Mammary epithelial cell (primary cell): ENCODE measurements at regions of chr17 and their contacts with region 1.

Region 1: GRCh38 chr17:80374732-80375585 is 40.0 kb upstream of the ENDOV start:
- DNase-seq: no peak
- H3K4me3 ChIP-seq: no peak overlapping the region
- H3K27ac ChIP-seq: no peak overlapping the region
- H3K4me1 ChIP-seq: no peaks in the 10 kb centered on the region
- H3K27me3 ChIP-seq: no peaks in the 10 kb centered on the region
- CTCF ChIP-seq: no peak

Region 2: DNA sequence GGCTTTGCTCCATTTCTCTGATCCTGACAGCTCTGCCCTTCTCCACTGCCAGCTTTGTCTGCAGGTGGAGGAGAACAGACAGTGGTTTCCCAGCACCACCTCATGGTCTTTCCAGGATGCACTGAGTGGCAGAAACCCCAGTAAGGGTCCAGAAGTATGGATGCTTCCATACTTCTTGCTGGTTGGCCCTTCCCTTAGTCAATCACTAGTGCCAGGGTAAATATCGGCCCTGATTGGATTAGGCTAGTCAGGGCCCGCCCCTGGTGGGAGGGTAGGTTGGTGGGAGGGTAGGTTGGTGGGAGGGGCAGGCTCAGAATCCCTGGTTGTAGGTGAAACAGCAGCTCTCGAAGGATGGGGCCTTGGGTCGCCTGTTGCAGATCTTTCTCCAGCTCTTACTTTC is 104.1 kb before region 1 on chr17:
- CTCF ChIA-PET with region 1: no interaction called
- dilution Hi-C with region 1: loop called (anchors 5 kb)
- in situ Hi-C with region 1: no loop called
- intact Hi-C with region 1: no loop called
- DNase-seq: no peak
- H3K4me3 ChIP-seq: no peak overlapping the region
- H3K27ac ChIP-seq: no peak overlapping the region
- H3K4me1 ChIP-seq: no peaks in the 10 kb centered on the region
- H3K27me3 ChIP-seq: no peaks in the 10 kb centered on the region
- CTCF ChIP-seq: no peak

Region 3: DNA sequence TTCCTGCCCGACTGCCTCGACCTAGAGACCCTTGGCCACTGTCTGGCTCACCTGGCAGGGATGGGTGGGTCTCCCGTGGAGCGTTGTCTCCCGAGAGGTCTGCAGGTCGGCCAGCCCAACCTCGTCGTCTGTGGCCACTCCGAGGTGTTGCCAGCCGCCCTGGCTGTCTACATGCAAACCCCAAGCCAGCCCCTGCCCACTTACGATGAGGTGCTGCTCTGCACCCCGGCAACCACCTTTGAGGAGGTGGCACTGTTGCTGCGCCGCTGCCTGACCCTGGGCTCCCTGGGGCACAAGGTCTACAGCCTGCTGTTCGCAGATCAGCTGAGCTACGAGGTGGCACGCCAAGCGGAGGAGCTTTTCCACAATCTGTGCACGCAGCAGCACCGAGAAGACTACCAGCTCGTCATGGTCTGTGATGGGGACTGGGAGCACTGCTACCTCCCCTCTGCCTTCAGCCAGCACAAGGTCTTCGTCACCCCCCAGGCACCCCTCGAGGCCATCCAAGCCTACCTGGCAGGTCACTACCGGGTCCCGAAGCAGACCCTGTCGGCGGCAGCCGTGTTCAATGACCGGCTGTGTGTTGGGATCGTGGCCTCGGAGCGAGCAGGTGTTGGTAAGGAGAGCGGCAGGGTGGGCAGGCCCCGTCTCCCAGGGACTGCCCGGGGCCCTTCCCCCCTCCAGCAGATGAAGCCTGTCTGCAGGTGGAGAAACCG is 35.1 kb before region 1 on chr17:
- CTCF ChIA-PET with region 1: no interaction called
- dilution Hi-C with region 1: loop called (anchors 5 kb)
- in situ Hi-C with region 1: no loop called
- intact Hi-C with region 1: no loop called
- DNase-seq: no peak
- H3K4me3 ChIP-seq: no peak overlapping the region
- H3K27ac ChIP-seq: no peak overlapping the region
- H3K4me1 ChIP-seq: no peaks in the 10 kb centered on the region
- H3K27me3 ChIP-seq: no peaks in the 10 kb centered on the region
- CTCF ChIP-seq: no peak